Activated CD4-positive, alpha-beta memory T cell treated with anti-CD3 and anti-CD28 coated beads, Interleukin-2, amount 10 ng/mL, durations not matched to agents 7 days and 5 days (primary cell): ENCODE measurements at regions of chr6 and their contacts with region 1.

Region 1: DNA sequence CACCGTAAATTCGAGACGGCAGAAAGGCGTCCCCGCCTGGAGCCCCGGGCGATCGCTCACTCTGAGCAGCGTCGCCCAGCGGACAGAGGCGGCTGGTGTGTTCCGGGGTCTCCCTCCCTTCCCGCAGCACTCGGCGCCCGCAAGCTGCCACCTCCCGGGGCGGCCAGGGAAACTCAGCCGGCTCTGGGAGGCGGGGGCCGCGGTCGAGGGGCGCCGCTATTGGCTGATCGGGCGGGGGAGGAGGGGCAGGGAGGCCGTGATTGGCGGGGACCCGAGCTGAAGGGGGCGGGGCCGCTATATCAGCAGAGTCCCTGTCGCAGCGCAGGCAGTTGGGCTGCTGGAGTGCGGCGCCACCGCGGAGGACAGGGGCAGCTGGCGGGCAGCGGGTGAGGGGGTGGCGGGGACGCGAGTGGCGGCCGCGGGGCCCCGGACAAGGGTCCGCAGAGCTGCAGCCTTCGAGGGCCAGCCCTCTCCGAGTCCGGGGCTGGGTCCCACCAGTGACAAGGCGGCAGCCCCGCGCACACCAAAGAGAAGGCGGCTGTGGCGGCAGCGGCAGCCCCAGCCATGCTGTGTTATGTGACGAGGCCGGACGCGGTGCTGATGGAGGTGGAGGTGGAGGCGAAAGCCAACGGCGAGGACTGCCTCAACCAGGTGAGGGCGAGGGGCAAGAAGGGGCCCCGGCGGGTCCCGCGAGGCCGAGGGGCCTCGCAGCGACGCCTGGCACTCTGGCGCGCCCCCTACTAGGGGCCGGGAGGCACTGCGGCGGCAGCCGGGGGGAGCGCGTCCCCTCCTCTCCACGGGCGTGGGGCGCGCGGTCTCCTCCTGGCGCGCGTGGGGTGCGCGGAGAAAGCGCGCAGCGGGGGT is at the start of gene MYLIP:
- DNase-seq: peak; percentile 97
- H3K4me3 Mint-ChIP-seq: peak within 1 kb of the TSS; percentile 95
- H3K27ac Mint-ChIP-seq: peak within 1 kb of the TSS; percentile 88
- H3K4me1 Mint-ChIP-seq: peaks cover 41% of the 10 kb centered on the region
- H3K27me3 Mint-ChIP-seq: peaks cover 20% of the 10 kb centered on the region
- total RNA-seq, gene MYLIP: 16.2 to 18.6 TPM

Region 2: GRCh38 chr6:15691250-15691869 is 437.6 kb before region 1 on chr6:
- CTCF ChIA-PET with region 1: interaction called, 11 read pairs
- POLR2A ChIA-PET with region 1: interaction called, 3 read pairs
- DNase-seq: peak; percentile 84
- H3K4me3 Mint-ChIP-seq: no peak overlapping the region
- H3K27ac Mint-ChIP-seq: peak overlapping the region; percentile 2
- H3K4me1 Mint-ChIP-seq: peaks cover 10% of the 10 kb centered on the region
- H3K27me3 Mint-ChIP-seq: peaks cover 6% of the 10 kb centered on the region

Region 3: DNA sequence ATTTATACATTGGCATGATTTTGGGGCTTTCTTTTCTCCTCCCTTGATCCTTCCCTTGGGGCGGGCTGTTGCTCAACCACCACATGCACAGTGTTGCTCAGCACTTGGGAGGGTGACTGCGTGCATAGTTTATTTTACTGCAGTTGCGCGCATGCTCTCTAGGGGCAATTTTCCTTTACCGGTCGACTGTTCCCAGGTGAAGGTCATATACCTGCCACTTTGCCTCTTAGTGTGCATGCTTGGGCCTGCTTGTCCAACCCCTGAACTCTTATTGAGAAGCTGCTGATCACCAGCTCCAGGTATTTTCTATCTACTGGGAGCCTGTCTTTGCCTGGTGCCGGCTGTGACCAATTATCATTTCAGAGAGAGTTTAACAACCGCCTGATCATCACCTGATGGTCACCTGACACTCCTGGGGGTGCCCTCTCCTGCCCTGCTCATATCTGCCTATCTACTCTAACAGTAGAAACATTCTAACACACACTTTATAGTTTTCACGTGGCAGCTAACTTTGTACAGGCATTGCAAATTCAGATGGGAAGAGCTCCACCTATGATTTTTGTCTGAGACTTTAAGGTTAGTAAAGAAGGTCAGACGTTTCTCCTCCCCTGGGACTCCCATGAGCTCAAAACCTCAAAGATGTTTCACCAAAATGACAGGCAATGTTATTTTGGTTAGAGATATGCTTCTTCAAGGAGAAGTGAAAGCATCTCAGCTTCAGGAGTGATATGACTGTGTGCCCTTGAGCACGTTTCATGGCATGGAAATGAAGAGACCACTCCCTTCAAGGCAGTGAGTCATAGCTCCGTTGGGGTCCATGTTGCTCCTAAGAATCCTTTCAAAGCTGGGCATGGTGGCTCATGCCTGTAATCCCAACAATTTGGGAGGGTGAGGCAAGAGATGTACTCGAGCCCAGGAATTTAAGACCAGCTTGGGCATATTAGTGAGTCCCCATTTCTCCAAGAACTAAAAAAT is 227.6 kb before region 1 on chr6:
- CTCF ChIA-PET with region 1: interaction called, 9 read pairs
- POLR2A ChIA-PET with region 1: interaction called, 10 read pairs
- DNase-seq: peak; percentile 44
- H3K4me3 Mint-ChIP-seq: no peak overlapping the region
- H3K27ac Mint-ChIP-seq: peak overlapping the region; percentile 44
- H3K4me1 Mint-ChIP-seq: peaks cover 34% of the 10 kb centered on the region
- H3K27me3 Mint-ChIP-seq: no peaks in the 10 kb centered on the region

Region 4: GRCh38 chr6:16163535-16164300 is 34.7 kb after region 1 on chr6:
- CTCF ChIA-PET with region 1: interaction called, 4 read pairs
- POLR2A ChIA-PET with region 1: interaction called, 11 read pairs
- DNase-seq: no peak
- H3K4me3 Mint-ChIP-seq: no peak overlapping the region
- H3K27ac Mint-ChIP-seq: no peak overlapping the region
- H3K4me1 Mint-ChIP-seq: peaks cover 20% of the 10 kb centered on the region
- H3K27me3 Mint-ChIP-seq: peaks cover 26% of the 10 kb centered on the region

Region 5: DNA sequence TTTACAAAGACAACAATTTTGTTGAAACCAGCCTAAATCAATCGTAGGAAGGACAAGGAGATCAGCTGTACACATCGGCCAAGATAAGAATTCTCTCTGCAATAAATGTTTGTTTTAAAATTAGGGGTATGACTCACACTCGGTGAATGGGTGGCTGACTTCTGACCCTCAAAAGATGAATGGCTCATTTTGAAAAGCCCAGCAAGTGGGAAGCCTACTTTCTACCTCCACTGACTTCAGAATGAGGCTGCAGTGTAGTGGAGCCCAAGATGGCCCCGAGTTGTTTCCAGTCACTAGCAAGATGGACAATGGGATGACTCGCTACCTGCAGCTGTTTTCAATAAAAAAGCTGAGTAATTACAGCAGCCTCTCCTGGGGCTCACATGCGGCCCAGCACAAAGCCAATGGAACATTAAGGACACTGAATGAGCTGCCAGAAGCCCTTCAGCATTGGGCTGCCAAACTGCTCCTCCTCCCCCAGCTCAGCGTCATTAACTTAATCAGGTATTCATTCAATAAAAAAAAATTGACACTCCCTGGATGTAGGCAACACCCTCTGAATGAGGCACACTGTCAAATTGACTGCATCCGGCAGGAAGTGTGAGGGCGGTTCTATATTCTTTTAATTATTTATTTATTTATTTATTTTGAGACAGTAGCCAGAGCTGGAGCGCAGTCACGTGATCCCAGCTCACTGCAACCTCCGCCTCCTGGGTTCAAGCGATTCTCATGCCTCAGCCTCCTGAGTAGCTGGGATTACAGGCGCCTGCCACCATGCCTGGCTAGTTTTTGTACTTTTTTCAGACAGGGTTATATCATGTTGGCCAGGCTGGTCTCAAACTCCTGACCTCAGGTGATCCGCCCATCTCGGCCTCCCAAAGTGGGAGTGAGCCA is 216.7 kb after region 1 on chr6:
- CTCF ChIA-PET with region 1: no interaction called
- POLR2A ChIA-PET with region 1: no interaction called
- DNase-seq: no peak
- H3K4me3 Mint-ChIP-seq: no peak overlapping the region
- H3K27ac Mint-ChIP-seq: no peak overlapping the region
- H3K4me1 Mint-ChIP-seq: no peaks in the 10 kb centered on the region
- H3K27me3 Mint-ChIP-seq: no peaks in the 10 kb centered on the region